ENCODE measurements at regions of chr19 and their contacts with region 1.

Region 1: GRCh38 chr19:1825909-1826556 is 14.0 kb upstream of the ATP8B3 start:
- DNase-seq: peak; percentile 82
- ATAC-seq: peak; percentile 83
- H3K4me3 Mint-ChIP-seq: no peak overlapping the region
- H3K27ac Mint-ChIP-seq: no peak overlapping the region
- H3K4me1 Mint-ChIP-seq: peaks cover 4% of the 10 kb centered on the region
- H3K27me3 Mint-ChIP-seq: no peaks in the 10 kb centered on the region

Region 2: DNA sequence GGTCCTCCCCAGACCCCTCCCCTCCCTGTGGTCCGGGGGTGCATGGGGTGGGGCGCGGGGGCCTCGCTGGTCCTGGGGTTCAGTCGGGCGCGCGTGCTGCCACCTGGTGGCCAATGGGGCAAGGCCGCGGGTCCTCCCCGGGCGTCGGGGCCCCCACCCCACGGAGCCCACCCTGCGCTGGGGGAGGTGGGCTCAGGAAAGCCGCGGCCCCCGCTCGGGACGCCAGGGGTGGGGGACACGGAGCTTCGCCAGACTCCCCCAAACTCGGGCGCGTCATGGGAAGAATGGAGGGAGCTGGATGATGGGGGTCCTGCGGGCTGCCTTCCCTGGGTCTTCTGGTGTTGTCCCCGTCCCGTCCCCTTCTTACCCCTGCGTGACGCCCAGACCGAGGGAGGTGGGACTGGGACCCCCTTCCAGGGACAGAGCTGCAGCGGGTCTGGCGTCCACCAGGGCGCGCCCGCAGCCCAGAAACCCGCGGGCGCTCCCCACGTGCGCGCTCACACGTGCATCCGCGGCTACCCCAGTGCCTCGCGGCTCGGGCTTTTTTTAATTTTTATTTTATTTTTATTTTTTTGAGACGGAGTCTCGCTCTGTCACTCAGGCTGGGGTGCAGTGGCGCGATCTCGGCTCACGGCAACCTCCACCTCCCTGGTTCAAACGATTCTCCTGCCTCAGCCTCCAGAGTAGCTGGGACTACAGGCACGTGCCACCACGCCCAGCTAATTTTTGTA is 153.8 kb before region 1 on chr19:
- CTCF ChIA-PET with region 1: interaction called, 12 read pairs
- POLR2A ChIA-PET with region 1: no interaction called
- DNase-seq: peak; percentile 60
- ATAC-seq: peak; percentile 65
- H3K4me3 Mint-ChIP-seq: no peak overlapping the region
- H3K27ac Mint-ChIP-seq: no peak overlapping the region
- H3K4me1 Mint-ChIP-seq: peaks cover 10% of the 10 kb centered on the region
- H3K27me3 Mint-ChIP-seq: peaks cover 48% of the 10 kb centered on the region

Region 3: DNA sequence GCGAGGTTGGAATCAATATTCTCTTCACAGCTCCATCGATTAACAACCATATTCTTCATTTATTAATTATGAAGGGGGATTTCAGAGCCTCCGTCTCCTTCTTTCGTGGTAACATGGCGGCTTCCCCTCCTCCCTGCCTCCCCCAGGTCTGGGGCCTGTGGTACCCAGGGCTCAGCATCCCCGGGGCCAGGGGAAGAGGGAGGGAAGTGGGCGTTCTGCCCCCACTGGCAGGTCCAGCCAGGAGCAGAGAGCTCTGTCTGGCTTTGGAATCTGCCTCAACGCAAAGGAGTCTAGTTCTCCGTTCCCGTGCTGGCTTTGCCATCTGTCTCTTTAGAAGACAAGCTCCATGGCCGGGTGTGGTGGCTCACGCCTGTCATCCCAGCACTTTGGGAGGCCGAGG is 110.5 kb before region 1 on chr19:
- CTCF ChIA-PET with region 1: no interaction called
- POLR2A ChIA-PET with region 1: no interaction called
- DNase-seq: no peak
- ATAC-seq: no peak
- H3K4me3 Mint-ChIP-seq: no peak overlapping the region
- H3K27ac Mint-ChIP-seq: no peak overlapping the region
- H3K4me1 Mint-ChIP-seq: no peaks in the 10 kb centered on the region
- H3K27me3 Mint-ChIP-seq: peaks cover 29% of the 10 kb centered on the region

Region 4: GRCh38 chr19:1794424-1795172 is 31.4 kb before region 1 on chr19:
- CTCF ChIA-PET with region 1: interaction called, 10 read pairs
- POLR2A ChIA-PET with region 1: no interaction called
- DNase-seq: no peak
- ATAC-seq: no peak
- H3K4me3 Mint-ChIP-seq: no peak overlapping the region
- H3K27ac Mint-ChIP-seq: no peak overlapping the region
- H3K4me1 Mint-ChIP-seq: peaks cover 2% of the 10 kb centered on the region
- H3K27me3 Mint-ChIP-seq: no peaks in the 10 kb centered on the region

Region 5: DNA sequence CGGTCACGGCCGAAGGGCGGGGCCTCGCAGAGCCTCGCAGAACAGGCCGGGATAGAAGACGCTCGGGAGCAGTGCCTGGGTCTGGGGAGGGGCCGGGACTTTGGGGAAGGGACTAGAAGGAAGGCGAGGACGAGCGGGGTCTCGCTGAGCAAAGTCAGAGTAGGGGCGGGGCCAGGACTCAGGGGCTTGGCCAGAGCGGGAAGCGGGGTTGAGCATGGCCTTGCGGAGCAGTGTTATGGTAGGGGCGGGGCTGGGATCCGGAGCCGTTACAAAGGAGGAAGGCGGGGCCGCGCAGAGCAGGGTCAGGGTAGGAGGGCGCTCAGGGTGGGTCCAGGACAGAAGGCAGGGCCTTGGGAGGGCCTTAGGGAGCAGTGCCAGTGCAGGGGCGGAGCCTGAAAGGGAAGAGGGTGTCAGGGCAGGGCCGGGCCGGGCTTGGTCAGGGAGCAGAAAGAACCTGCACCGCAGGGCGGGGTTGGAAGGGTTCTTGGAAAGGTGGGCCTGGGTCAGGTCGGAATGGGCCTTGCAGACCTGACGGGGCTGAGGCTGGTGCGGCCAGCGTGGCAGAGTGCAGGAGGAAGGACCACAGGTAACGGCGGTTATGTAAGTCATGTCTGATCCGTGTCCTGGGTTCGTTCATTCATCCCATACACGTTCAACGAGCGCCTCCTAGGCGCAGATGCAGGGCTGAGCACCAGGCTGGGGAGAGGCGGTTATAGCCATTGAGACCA is 13.4 kb before region 1 on chr19:
- CTCF ChIA-PET with region 1: interaction called, 11 read pairs
- POLR2A ChIA-PET with region 1: no interaction called
- DNase-seq: peak; percentile 98
- ATAC-seq: peak; percentile 92
- H3K4me3 Mint-ChIP-seq: peak overlapping the region; percentile 89
- H3K27ac Mint-ChIP-seq: peak overlapping the region; percentile 100
- H3K4me1 Mint-ChIP-seq: peaks cover 24% of the 10 kb centered on the region
- H3K27me3 Mint-ChIP-seq: no peaks in the 10 kb centered on the region

Region 6: DNA sequence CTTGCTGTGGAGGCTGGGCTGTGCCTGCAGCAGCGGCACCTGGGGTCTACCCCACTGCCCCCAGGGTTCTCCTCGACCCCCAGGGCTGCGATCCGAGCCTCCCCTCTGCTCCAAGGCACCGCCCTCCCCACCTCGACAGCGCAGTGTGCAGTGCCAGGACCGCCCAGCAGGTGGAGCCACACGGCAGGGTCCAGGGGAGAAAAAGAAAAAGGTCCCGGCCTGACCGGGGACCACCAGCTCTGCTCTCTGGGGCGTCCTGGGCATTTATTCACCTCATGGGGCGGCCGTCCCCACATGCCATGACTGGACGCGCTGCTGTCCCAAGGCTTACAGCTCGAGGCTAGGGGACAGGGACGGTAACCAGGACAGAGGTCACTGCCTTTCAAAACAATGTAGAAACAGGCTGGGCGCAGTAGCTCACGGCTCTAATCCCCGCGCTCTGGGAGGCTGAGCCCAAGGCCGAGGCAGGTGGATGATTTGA is 11.6 kb after region 1 on chr19:
- CTCF ChIA-PET with region 1: interaction called, 32 read pairs
- POLR2A ChIA-PET with region 1: no interaction called
- DNase-seq: peak; percentile 69
- ATAC-seq: peak; percentile 65
- H3K4me3 Mint-ChIP-seq: no peak overlapping the region
- H3K27ac Mint-ChIP-seq: no peak overlapping the region
- H3K4me1 Mint-ChIP-seq: peaks cover 13% of the 10 kb centered on the region
- H3K27me3 Mint-ChIP-seq: no peaks in the 10 kb centered on the region

Region 7: DNA sequence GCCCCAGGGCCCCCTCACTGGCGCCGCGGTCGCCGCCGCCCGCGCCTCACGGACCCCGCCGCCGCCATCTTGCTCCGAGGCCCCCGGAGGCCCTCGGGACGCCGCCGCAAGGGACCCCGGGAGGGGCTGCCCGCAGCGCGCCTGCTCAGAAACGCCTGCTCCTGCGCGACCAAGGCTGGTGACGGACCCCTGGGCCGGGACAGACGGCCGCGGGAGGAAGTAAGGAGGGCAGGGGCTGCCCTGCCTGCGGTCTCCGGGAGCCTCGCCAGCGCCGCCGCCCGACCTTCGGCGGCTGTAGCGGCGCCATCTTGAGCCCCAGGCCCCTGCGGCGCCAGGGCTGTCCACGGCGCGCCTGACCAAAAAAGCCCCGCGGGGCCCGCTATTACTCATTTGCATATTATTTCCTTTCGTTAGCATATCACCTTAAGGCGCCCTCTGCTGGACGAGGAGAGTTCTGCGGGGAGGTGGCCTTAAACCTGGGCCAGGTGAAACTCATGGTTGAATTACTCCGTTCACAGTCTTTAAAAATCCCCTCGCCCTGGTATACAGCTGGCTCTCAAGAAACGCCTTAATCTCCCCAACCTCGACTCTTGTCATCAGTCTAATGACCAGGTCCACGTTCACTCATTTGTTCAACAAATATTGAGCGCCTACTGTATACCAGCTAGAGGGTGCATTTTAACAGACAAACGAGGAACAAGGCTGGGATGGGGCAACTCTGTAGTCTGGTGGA is 22.5 kb after region 1 on chr19 and contains the start of gene REXO1:
- CTCF ChIA-PET with region 1: interaction called, 10 read pairs
- POLR2A ChIA-PET with region 1: no interaction called
- DNase-seq: peak; percentile 98
- ATAC-seq: peak; percentile 72
- H3K4me3 Mint-ChIP-seq: peak within 1 kb of the TSS; percentile 91
- H3K27ac Mint-ChIP-seq: peak within 1 kb of the TSS; percentile 96
- H3K4me1 Mint-ChIP-seq: peaks cover 55% of the 10 kb centered on the region
- H3K27me3 Mint-ChIP-seq: no peaks in the 10 kb centered on the region
- total RNA-seq, gene REXO1: 47.9 to 52.9 TPM